ENCODE measurements at regions of chr2 and their contacts with region 1.

Region 1: DNA sequence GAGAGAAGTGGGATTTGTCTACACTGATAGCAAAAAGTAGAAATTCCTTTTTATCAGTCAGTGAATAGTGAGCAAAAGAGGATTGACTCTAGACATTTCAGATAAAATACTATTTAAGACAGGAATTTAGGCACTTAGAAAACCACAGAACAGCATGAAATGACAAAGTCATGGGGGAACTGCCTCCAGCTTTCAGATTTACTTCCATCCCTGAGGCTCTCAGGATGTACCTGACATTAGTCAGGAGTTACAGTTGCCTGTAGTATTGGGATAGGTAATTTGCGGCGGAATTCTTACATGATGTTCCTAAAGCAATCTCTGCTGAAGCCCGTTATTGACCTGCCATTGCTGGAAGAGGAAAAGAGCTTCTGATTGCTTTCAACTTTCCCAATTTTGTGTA is 337.1 kb upstream of the MAP2 start:
- DNase-seq: no peak
- H3K4me3 Mint-ChIP-seq: no peak overlapping the region
- H3K27ac Mint-ChIP-seq: no peak overlapping the region
- H3K4me1 Mint-ChIP-seq: no peaks in the 10 kb centered on the region
- H3K27me3 Mint-ChIP-seq: no peaks in the 10 kb centered on the region

Region 2: GRCh38 chr2:207625018-207625907 is 1461.5 kb before region 1 on chr2 and contains the start of gene METTL21A:
- CTCF ChIA-PET with region 1: no interaction called
- intact Hi-C with region 1: no loop called
- DNase-seq: peak; percentile 95
- H3K4me3 Mint-ChIP-seq: peak within 1 kb of the TSS; percentile 88
- H3K27ac Mint-ChIP-seq: peak within 1 kb of the TSS; percentile 89
- H3K4me1 Mint-ChIP-seq: peaks cover 56% of the 10 kb centered on the region
- H3K27me3 Mint-ChIP-seq: no peaks in the 10 kb centered on the region
- total RNA-seq, gene METTL21A: 18.6 to 19.0 TPM

Region 3: DNA sequence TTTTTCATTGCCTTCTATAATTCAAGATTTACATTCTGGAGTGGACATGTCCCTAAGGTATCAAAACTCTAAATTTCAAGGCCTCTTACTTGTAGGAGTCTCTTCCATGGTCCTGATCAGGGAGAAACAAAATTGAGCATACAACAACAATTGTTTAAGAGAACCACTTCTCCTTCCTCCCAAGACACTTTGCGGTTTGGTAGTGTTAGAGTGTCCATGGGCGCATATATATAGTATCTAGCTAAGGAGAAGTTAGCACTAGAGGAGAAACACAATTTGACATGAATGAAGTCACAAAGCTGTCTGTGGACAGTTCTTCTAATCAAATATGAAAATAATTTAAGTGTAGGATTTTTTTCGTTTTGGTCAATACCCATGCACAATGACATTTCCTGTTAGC is 12.1 kb before region 1 on chr2:
- CTCF ChIA-PET with region 1: no interaction called
- intact Hi-C with region 1: loop called (anchors 1 kb)
- DNase-seq: no peak
- H3K4me3 Mint-ChIP-seq: no peak overlapping the region
- H3K27ac Mint-ChIP-seq: no peak overlapping the region
- H3K4me1 Mint-ChIP-seq: no peaks in the 10 kb centered on the region
- H3K27me3 Mint-ChIP-seq: no peaks in the 10 kb centered on the region

Region 4: DNA sequence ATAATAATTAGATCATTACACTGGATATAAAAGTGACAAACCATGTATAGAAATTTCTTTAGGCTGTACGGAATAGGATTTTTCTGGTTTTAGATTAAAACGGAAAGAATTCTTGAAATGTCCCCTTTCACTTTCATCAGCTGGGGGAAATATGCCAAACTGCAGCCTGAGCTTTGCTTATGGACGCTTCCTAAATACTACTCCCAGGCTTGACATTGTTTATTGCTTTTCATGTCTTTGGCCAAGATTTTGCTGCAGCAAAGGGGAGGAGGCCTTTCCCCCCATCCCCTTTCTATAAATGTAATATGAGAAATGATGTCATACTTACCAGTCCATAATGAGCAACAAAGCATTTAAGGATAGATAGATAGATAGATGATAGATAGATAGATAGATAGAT is 495.5 kb after region 1 on chr2:
- CTCF ChIA-PET with region 1: no interaction called
- intact Hi-C with region 1: no loop called
- DNase-seq: no peak
- H3K4me3 Mint-ChIP-seq: no peak overlapping the region
- H3K27ac Mint-ChIP-seq: no peak overlapping the region
- H3K4me1 Mint-ChIP-seq: peaks cover 6% of the 10 kb centered on the region
- H3K27me3 Mint-ChIP-seq: no peaks in the 10 kb centered on the region

Measured in activated naive CD4-positive, alpha-beta T cell treated with anti-CD3 and anti-CD28 coated beads for 36 hours (primary cell).